ENCODE measurements at regions of chr13 and their contacts with region 1.

Region 1: GRCh38 chr13:108218044-108218974 is at the start of gene ABHD13:
- DNase-seq: peak; percentile 78 to 96 (median 88)
- ATAC-seq: peak; percentile 67
- H3K4me3 ChIP-seq: peak within 1 kb of the TSS; percentile 89
- H3K4me3 Mint-ChIP-seq: peak within 1 kb of the TSS; percentile 99
- H3K27ac ChIP-seq: peak within 1 kb of the TSS; percentile 53 to 70
- H3K27ac Mint-ChIP-seq: peak within 1 kb of the TSS; percentile 96
- H3K4me1 ChIP-seq: peaks cover 33% of the 10 kb centered on the region
- H3K4me1 Mint-ChIP-seq: peaks cover 71% of the 10 kb centered on the region
- H3K27me3 ChIP-seq: no peaks in the 10 kb centered on the region
- H3K27me3 Mint-ChIP-seq: no peaks in the 10 kb centered on the region
- CTCF ChIP-seq: no peak
- total RNA-seq, gene ABHD13: 18.0 to 18.6 TPM

Region 2: DNA sequence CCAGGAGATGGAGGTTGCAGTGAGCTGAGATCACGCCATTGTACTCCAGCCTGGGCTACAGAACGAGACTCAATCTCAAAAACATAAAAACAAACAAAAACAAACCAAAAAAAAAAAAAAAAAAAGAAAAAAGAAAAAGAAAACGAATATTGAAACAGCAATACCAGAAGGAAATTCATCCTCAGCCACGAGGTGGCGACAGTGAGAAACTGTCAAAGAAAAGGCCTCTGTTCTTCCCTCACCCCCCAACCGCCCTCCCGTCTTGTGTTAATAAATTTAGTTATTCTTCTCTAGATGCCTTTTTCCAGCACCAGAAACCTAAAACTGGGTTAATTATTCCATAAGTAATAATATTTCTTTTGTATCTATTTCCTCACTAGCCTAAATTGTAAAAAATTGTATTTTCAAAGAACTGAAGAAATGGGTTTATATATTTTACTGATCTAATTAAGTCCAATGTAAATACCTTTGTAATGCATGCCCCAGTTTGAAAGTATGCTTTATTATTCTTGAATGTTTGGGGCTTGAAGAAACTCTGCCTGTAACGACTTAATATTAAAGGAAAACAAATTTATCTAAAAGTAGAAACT is 41.5 kb before region 1 on chr13:
- CTCF ChIA-PET with region 1: interaction called, 3 read pairs
- POLR2A ChIA-PET with region 1: no interaction called
- intact Hi-C with region 1: loop called (anchors 5 kb)
- DNase-seq: peak; percentile 31 to 71 (median 46)
- ATAC-seq: peak; percentile 56
- H3K4me3 ChIP-seq: no peak overlapping the region
- H3K4me3 Mint-ChIP-seq: no peak overlapping the region
- H3K27ac ChIP-seq: no peak overlapping the region
- H3K27ac Mint-ChIP-seq: no peak overlapping the region
- H3K4me1 ChIP-seq: no peaks in the 10 kb centered on the region
- H3K4me1 Mint-ChIP-seq: no peaks in the 10 kb centered on the region
- H3K27me3 ChIP-seq: no peaks in the 10 kb centered on the region
- H3K27me3 Mint-ChIP-seq: peaks cover 5% of the 10 kb centered on the region
- CTCF ChIP-seq: peak; percentile 69